Mammary epithelial cell (primary cell): ENCODE measurements at regions of chr13 and their contacts with region 1.

Region 1: DNA sequence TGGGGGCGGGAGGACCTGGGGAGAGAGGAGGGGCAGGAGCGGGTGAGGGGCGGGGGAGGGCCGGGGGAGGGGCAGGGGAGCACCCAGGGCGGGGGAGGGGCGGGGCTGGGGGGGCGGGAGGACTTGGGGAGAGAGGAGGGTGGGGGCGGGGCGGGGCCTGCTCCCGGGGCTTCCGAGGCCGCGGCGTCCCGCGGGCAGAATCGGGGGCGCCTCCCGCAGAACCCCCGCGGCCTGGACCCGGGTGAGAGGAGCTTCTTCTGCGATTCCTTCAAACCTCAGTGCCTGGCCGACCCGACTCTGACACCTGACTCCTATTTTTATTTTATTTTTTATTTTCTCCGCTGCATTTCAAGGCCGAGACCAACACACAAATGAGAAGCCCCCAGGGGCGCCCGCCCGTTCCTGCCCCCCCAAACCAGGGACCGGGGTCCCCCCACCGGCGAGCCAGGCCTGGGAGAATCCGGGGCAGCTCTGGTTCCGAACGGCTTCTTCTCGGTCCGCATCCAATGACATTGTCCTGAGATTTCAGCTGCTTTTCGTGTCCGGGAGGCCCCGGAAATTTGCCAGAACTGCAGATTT is 470 bp upstream of the GRTP1 start:
- DNase-seq: no peak
- H3K4me3 ChIP-seq: peak overlapping the region in 1 of 3 experiments; percentile 35
- H3K27ac ChIP-seq: no peak overlapping the region
- H3K4me1 ChIP-seq: peaks cover 6% of the 10 kb centered on the region
- H3K27me3 ChIP-seq: no peaks in the 10 kb centered on the region
- CTCF ChIP-seq: no peak

Region 2: DNA sequence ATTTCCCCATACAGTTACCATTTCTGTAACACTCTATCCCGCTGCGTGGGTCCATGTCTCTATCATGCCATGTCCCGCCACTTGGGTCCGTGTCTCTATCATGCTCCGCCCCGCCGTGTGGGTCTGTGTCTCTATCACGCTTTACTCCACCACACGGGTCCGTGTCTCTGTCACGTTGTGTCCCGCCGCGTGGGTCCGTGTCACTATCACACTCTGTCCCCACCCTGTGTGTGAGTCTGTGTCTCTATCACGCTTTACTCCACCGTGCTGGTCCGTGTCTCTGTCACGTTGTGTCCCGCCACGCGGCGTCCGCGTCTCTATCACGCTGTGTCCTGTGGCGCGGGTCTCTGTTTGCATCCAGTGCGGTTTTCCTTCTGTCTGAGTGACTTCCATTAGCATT is 77.3 kb after region 1 on chr13:
- CTCF ChIA-PET with region 1: no interaction called
- dilution Hi-C with region 1: loop called (anchors 5 kb)
- in situ Hi-C with region 1: no loop called
- intact Hi-C with region 1: no loop called
- DNase-seq: no peak
- H3K4me3 ChIP-seq: no peak overlapping the region
- H3K27ac ChIP-seq: no peak overlapping the region
- H3K4me1 ChIP-seq: no peaks in the 10 kb centered on the region
- H3K27me3 ChIP-seq: no peaks in the 10 kb centered on the region
- CTCF ChIP-seq: no peak

Region 3: DNA sequence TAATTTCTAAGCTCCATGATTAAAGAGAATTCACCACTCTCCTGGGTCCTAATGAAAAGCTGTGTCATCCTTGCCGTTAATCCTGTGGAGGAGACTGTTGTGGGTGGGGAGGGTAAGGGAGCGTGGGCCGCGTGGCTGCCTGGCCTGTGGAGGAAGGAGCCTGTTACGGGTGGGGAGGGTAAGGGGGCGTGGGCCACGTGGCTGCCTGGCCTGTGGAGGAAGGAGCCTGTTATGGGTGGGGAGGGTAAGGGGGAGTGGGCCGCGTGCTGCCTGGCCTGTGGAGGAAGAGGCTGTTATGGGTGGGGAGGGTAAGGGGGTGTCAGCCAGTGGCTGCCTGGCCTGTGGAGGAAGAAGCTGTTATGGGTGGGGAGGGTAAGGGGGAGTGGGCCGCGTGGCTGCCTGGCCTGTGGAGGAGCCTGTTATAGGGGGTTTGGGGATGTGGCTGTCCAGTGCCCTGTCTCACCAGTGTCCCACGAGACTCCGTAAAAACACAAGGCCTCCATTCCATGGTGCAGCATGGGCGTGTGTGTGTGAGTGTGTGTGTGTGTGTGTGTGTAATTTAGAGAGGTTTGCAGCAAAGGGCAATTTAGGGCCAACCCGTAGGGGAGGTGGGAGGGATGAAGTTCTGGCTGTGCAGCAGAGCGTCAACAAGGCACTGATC is 141.8 kb after region 1 on chr13:
- CTCF ChIA-PET with region 1: no interaction called
- dilution Hi-C with region 1: no loop called
- in situ Hi-C with region 1: no loop called
- intact Hi-C with region 1: no loop called
- DNase-seq: no peak
- H3K4me3 ChIP-seq: no peak overlapping the region
- H3K27ac ChIP-seq: no peak overlapping the region
- H3K4me1 ChIP-seq: no peaks in the 10 kb centered on the region
- H3K27me3 ChIP-seq: no peaks in the 10 kb centered on the region
- CTCF ChIP-seq: no peak